ENCODE measurements at regions of chr7 and their contacts with region 1.

Region 1: DNA sequence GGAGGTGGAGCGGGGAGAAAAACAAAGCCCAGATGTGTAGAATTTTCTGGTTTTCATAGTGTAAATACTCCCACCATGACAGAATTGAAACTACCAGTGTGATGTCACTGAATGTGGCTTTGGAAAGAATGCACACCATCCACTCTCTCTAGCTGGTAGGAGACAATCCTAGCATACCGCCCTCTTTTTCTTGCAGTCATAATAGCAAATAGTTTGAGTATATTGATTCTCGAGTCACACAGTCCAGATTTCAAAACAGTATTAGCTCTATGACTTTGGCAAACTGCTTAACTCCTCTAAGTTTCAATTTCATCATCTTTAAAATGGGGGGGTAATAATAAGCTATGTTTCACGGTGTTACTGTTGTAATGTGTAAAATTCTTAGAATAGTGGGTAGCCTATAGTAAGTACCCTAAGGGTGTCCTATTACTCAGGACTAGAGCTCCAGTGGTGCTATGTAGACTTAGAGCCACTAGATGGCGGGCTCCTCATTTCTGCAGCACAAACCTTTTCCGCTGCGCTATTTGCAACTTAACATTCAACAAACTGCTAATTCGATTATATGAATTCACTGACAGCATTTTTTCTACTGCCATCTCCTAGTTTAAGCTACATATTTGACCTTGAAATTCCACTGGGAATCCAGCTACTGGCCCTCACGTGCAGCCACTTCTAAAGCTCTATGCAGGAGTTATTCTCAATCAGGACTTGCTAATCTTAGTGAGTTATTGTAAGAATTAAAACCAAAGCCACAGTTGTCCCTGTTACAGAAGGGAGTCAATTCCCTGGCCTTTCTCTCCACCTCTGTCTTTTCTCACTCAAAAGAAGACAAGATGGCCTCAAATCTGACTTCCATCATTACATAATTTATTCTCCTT is 18.7 kb downstream of the TAS2R40 start:
- DNase-seq: peak; percentile 78
- H3K4me3 ChIP-seq: no peak overlapping the region
- H3K27me3 ChIP-seq: peaks cover 6% of the 10 kb centered on the region
- CTCF ChIP-seq: peak; percentile 88

Region 2: GRCh38 chr7:143181349-143181748 is 59.2 kb before region 1 on chr7:
- CTCF ChIA-PET with region 1: no interaction called
- POLR2A ChIA-PET with region 1: no interaction called
- DNase-seq: no peak
- H3K4me3 ChIP-seq: no peak overlapping the region
- H3K27me3 ChIP-seq: no peaks in the 10 kb centered on the region
- CTCF ChIP-seq: no peak

Region 3: GRCh38 chr7:143256932-143257331 is 16.4 kb after region 1 on chr7:
- CTCF ChIA-PET with region 1: interaction called, 13 read pairs
- POLR2A ChIA-PET with region 1: no interaction called
- DNase-seq: no peak
- H3K4me3 ChIP-seq: no peak overlapping the region
- H3K27me3 ChIP-seq: no peaks in the 10 kb centered on the region
- CTCF ChIP-seq: no peak

Region 4: GRCh38 chr7:143299840-143300239 is 59.3 kb after region 1 on chr7:
- CTCF ChIA-PET with region 1: interaction called, 13 read pairs
- POLR2A ChIA-PET with region 1: no interaction called
- DNase-seq: no peak
- H3K4me3 ChIP-seq: no peak overlapping the region
- H3K27me3 ChIP-seq: no peaks in the 10 kb centered on the region
- CTCF ChIP-seq: peak; percentile 39

Region 5: DNA sequence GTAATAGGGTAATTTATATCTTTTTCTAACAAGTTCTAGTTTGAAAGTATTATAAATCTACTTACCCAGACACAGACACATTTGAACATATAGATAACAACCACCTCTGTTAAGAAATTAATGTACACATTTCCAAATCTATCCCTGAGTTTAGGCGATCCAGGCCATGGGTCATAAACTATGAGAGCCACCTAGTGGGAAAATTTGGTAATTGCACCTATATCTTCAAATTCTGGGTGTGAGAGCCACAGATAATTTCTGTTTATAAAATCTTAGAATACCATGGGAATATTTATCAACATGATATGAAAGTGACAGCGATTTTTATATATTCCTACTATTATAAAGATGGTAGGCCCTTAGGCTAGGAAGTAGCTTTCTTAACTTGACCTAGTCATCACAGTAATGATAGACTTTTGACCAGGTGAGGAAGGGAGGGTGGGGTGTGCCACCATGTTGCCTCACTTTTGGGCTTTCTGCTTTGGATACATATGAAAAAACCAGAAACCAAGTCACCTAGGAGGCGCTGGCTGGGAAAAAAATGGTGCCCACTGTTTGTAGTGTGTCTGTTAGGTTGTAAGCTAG is 176.1 kb after region 1 on chr7:
- CTCF ChIA-PET with region 1: interaction called, 28 read pairs
- POLR2A ChIA-PET with region 1: no interaction called
- DNase-seq: no peak
- H3K4me3 ChIP-seq: no peak overlapping the region
- H3K27me3 ChIP-seq: no peaks in the 10 kb centered on the region
- CTCF ChIP-seq: peak; percentile 69

Region 6: DNA sequence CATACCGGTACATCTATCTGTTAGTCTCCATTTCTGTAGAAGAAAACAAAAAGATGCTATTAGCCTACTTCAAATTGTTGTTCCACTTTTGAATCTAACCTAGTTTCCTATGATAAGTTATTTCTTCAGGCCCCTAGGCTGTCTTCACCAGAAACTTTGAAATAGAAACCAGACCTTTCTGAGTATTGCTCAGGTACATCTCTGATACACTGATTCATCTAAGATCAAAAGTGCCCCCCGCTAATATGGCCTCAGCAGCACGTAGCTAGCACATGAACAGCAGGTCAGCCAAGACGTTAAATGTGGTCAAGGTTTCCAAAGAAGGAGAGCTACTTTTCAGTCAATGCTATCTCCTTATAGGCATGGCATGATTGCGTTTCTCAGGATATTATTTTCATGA is 493.3 kb after region 1 on chr7:
- CTCF ChIA-PET with region 1: no interaction called
- POLR2A ChIA-PET with region 1: no interaction called
- DNase-seq: no peak
- H3K4me3 ChIP-seq: no peak overlapping the region
- H3K27me3 ChIP-seq: no peaks in the 10 kb centered on the region
- CTCF ChIP-seq: no peak

Region 7: GRCh38 chr7:143936087-143937009 is 695.8 kb after region 1 on chr7:
- CTCF ChIA-PET with region 1: no interaction called
- POLR2A ChIA-PET with region 1: no interaction called
- DNase-seq: peak; percentile 83
- H3K4me3 ChIP-seq: no peak overlapping the region
- H3K27me3 ChIP-seq: no peaks in the 10 kb centered on the region
- CTCF ChIP-seq: no peak

Measured in BJ (cell line).